Activated CD8-positive, alpha-beta T cell treated with anti-CD3 and anti-CD28 coated beads, Interleukin-2, amount 10 ng/mL, durations not matched to agents 7 days and 5 days (primary cell): ENCODE measurements at regions of chr10 and their contacts with region 1.

Region 1: DNA sequence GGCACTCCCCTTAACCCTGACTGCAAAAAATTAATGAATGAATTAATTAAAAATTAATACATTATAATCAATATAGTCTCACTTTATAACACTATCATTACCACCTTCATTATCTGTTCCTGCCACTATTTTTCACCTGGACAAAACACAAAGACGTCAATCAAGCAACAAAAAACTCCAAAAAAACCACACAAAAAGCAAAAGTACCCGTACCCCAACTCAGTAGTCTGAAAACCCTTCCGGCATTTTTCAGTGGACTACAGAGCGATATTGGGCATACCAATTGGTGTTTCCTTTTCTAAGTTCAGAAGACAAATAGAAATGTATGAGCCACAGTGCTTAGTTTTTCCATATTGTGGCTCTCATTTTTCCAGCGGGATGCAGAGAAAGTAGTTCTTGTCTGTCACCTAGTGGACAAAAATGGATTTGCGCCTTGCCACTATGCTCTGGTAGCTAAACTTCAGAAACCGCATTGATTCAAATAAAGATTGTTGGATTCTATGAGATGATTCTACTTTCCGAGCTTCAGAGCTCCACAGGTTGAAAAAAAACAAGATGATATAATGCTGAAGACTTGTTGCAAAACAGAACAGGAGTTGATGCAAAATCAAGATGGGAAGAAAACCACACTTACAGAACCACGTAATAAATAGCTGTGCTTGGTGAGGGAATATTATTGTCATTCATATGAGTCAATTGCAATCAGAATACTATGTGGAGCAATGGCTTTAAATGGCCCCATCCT is 50.6 kb upstream of the ITGB1 start:
- DNase-seq: peak; percentile 70
- ATAC-seq: peak; percentile 56
- H3K4me3 Mint-ChIP-seq: peak overlapping the region; percentile 53
- H3K27ac Mint-ChIP-seq: no peak overlapping the region
- H3K4me1 Mint-ChIP-seq: peaks cover 29% of the 10 kb centered on the region
- H3K27me3 Mint-ChIP-seq: peaks cover 12% of the 10 kb centered on the region

Region 2: DNA sequence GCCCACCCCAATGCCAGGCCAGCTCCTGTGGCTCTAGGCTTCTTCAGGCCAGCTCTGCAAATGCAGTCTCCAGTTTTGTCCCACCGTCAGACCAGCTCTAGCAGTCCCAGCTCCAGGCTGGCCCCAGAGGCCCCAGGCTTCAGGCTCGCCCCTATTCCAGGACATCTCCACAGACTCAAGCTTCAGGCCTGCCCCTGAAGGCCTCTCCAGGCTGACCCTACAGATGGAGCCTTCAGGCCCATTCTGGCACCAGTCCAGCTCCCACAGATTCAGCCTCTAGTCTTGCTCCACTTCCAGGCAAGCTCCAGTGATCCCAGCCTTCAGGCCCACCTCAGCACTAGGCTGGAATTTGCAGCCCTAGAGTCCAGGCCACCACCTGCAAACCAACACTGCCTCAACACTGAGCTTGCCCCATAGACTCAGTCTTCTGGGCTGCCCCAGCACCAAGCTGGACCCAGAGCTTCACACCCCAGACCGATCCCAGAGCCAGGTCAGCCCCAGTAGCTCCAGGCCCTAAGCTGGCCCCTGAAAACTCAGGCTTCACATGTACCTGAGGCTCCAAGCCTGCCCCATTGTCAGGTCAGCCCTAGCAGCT is 220.9 kb before region 1 on chr10:
- CTCF ChIA-PET with region 1: interaction called, 11 read pairs
- POLR2A ChIA-PET with region 1: no interaction called
- DNase-seq: no peak
- ATAC-seq: no peak
- H3K4me3 Mint-ChIP-seq: no peak overlapping the region
- H3K27ac Mint-ChIP-seq: no peak overlapping the region
- H3K4me1 Mint-ChIP-seq: no peaks in the 10 kb centered on the region
- H3K27me3 Mint-ChIP-seq: no peaks in the 10 kb centered on the region

Region 3: DNA sequence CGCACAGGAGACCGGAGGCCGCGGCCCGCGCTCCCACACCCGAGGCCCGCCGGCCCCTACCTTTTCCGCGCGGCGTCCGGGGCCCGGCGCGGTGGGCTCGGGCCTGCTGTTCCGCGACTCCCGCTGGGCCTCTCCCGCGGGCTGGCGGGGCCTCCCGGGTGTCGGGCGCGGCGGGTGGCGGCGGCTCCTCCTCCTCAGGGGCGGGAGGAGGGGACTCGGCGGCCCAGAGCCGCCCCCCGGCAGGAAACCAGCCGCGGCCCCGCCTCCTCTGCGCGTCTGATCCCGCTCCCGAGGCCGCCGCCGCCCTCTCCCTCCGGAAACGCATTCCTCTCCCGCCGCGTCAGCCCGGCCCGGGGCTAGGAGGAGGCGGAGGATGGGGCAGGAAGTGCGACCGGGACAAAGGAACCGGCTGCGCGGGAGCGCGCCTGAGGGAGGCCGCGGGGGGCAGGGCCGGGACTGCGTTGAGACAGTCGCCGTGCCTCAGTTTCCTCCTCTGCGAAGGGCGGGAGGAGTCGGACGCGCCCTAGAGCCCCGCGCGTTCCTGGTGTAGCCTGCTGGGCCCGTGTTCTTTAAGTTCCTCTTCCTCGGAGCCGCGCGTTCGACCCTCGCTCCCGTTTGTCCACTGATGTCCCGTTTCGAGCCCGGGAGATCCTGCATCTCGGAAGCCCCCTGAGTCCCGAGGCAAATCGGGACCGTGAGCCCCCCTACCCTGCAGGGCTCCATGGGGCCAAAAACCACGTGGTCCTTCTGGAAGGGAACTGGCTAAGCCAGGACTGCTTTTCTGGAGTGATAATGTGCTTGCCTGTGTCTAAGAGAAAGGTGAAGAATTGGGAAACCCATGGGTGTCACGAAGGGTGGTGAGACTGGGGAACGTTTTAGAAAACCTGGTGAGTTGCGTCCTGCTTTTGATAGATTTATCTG is 50.3 kb before region 1 on chr10 and contains the start of gene ITGB1:
- CTCF ChIA-PET with region 1: interaction called, 12 read pairs
- POLR2A ChIA-PET with region 1: interaction called, 8 read pairs
- DNase-seq: peak; percentile 86
- ATAC-seq: peak; percentile 96
- H3K4me3 Mint-ChIP-seq: peak within 1 kb of the TSS; percentile 86
- H3K27ac Mint-ChIP-seq: peak within 1 kb of the TSS; percentile 76
- H3K4me1 Mint-ChIP-seq: peaks cover 33% of the 10 kb centered on the region
- H3K27me3 Mint-ChIP-seq: peaks cover 14% of the 10 kb centered on the region
- total RNA-seq, gene ITGB1: 35.0 to 40.2 TPM

Region 4: GRCh38 chr10:32980558-32981468 is 27.9 kb before region 1 on chr10:
- CTCF ChIA-PET with region 1: interaction called, 21 read pairs
- POLR2A ChIA-PET with region 1: no interaction called
- DNase-seq: peak; percentile 86
- ATAC-seq: peak; percentile 99
- H3K4me3 Mint-ChIP-seq: peak overlapping the region; percentile 81
- H3K27ac Mint-ChIP-seq: peak overlapping the region; percentile 91
- H3K4me1 Mint-ChIP-seq: peaks cover 36% of the 10 kb centered on the region
- H3K27me3 Mint-ChIP-seq: no peaks in the 10 kb centered on the region

Region 5: GRCh38 chr10:33022090-33022489 is 13.4 kb after region 1 on chr10:
- CTCF ChIA-PET with region 1: interaction called, 12 read pairs
- POLR2A ChIA-PET with region 1: no interaction called
- DNase-seq: no peak
- ATAC-seq: no peak
- H3K4me3 Mint-ChIP-seq: no peak overlapping the region
- H3K27ac Mint-ChIP-seq: no peak overlapping the region
- H3K4me1 Mint-ChIP-seq: peaks cover 11% of the 10 kb centered on the region
- H3K27me3 Mint-ChIP-seq: peaks cover 2% of the 10 kb centered on the region

Region 6: DNA sequence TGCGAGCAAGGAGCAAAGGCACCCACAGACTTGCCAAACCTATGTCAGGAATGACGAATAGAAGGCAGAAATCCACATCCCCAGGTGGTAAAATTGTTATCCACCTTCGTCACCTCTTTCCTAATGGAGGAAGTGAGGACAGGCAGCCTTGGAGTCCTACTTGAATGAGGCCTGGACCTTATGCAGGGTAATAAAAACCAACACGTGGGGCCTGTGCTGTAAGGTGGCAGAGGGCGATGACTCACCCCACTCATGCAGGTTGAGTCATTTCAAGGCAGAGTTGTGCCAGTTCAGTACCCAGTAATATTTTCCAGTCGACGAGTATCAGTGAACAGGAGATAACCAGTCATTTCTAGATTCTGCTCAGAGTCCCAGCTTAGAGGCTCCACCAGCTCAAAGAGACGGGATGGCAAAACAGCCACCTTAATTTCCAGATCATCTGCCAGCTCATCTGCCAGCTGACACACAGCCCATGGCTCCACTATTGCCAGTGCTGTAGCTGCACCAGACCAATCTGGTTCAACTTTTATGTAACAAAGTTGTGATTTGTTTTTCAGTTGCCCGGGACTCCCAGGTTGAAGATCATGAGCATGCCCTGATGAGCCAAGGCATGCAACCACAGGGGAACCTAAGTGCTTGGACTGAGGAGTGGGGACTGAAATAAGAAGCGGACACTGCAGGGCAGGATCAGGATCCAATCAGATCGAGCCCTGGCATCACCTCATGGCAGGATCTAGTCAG is 125.5 kb after region 1 on chr10:
- CTCF ChIA-PET with region 1: interaction called, 19 read pairs
- POLR2A ChIA-PET with region 1: no interaction called
- DNase-seq: peak; percentile 67
- ATAC-seq: peak; percentile 80
- H3K4me3 Mint-ChIP-seq: no peak overlapping the region
- H3K27ac Mint-ChIP-seq: peak overlapping the region; percentile 77
- H3K4me1 Mint-ChIP-seq: peaks cover 63% of the 10 kb centered on the region
- H3K27me3 Mint-ChIP-seq: no peaks in the 10 kb centered on the region

Region 7: DNA sequence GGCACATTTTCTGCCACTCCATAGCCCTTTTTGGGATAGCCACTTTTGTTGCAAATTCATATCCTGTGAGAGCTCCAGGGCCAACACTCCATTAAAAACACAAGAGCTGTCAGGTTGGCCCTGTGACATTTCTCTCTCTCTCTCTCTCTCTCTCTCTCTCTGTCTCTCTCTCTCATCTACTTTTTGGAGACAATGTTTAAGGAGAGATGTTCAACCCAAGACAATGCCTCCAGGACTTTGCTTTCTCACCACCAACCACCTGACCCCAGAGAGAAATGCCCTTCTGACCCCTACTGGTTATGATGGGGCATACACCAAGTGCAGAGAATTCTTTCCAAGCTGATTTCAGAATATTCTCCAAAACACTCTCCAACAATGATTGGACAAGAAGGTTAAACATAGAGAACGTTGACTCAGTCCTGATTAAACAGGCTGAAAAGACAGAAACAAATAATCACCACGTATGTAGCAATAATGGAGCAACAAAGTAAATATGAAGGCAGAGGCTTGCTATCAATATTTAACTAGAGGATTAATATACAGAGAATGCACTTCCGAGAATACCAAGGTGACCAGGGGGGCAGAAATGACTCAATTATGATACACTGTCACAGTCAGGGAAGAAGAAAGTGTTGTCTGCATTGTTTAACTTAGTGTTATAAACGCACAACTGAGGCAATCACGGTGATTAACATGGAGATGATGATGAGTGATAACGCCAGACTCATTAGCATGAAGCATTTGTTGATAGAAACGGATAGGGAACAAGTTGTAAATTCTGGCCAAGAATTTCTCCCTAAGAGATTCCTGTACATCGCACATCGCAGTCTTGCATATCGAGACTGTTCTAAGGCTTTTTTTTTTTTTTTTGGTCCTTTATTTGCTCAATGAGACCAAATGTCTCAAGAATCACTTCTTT is 147.3 kb after region 1 on chr10:
- CTCF ChIA-PET with region 1: interaction called, 33 read pairs
- POLR2A ChIA-PET with region 1: no interaction called
- DNase-seq: peak; percentile 46
- ATAC-seq: peak; percentile 80
- H3K4me3 Mint-ChIP-seq: no peak overlapping the region
- H3K27ac Mint-ChIP-seq: no peak overlapping the region
- H3K4me1 Mint-ChIP-seq: peaks cover 20% of the 10 kb centered on the region
- H3K27me3 Mint-ChIP-seq: peaks cover 2% of the 10 kb centered on the region

Region 8: DNA sequence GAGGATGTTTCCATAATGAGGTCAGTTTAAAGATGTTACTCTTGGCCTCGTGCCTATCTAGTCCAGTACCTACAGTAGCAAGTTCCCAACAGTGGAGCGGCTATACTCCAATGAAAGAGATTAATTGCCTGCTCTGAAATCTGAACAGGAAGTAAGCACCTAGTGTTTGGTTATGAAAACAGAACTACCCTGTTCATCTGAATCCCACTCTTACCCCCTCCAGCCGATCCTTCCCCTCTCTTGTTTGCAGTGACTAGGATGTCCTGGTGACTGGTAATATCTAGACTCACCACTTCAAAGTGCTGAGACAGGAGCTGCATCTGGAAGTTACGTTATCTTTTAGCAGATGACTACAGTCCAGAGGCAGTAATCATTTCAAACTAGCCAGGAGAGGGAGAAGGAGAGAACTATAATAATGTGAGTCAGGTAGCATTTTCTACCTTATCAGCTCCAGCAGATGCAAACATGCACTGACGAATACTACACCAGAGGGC is 992.5 kb after region 1 on chr10:
- CTCF ChIA-PET with region 1: no interaction called
- POLR2A ChIA-PET with region 1: no interaction called
- DNase-seq: no peak
- ATAC-seq: no peak
- H3K4me3 Mint-ChIP-seq: no peak overlapping the region
- H3K27ac Mint-ChIP-seq: no peak overlapping the region
- H3K4me1 Mint-ChIP-seq: no peaks in the 10 kb centered on the region
- H3K27me3 Mint-ChIP-seq: no peaks in the 10 kb centered on the region